ENCODE measurements at regions of chr1 and their contacts with region 1.

Region 1: DNA sequence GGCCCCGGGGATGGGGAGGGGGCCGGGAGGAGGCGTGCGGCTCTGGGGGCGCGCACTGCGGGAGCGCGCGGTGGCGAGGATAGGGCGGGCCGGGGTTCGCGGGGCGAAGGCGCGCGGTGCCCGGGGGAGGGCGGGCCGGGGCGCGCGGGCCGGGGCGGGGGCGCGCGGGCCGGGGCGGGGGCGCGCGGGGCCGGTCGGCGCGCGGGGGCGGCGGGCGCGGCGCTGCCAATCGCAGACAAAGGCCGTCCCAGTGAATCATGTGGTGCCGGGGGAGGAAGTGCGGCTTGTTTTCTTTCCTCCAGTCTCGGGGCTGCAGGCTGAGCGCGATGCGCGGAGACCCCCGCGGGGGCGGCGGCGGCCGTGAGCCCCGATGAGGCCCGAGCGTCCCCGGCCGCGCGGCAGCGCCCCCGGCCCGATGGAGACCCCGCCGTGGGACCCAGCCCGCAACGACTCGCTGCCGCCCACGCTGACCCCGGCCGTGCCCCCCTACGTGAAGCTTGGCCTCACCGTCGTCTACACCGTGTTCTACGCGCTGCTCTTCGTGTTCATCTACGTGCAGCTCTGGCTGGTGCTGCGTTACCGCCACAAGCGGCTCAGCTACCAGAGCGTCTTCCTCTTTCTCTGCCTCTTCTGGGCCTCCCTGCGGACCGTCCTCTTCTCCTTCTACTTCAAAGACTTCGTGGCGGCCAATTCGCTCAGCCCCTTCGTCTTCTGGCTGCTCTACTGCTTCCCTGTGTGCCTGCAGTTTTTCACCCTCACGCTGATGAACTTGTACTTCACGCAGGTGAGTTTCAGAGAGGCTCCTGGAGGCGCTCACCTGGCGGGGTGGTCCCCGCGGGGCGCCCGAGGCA is at the start of gene GPR137B:
- DNase-seq: peak; percentile 78
- ATAC-seq: peak; percentile 67
- H3K4me3 Mint-ChIP-seq: peak within 1 kb of the TSS; percentile 95
- H3K27ac Mint-ChIP-seq: peak within 1 kb of the TSS; percentile 84
- H3K4me1 Mint-ChIP-seq: peaks cover 15% of the 10 kb centered on the region
- H3K27me3 Mint-ChIP-seq: peaks cover 34% of the 10 kb centered on the region
- total RNA-seq, gene GPR137B: 5.0 to 5.6 TPM

Region 2: DNA sequence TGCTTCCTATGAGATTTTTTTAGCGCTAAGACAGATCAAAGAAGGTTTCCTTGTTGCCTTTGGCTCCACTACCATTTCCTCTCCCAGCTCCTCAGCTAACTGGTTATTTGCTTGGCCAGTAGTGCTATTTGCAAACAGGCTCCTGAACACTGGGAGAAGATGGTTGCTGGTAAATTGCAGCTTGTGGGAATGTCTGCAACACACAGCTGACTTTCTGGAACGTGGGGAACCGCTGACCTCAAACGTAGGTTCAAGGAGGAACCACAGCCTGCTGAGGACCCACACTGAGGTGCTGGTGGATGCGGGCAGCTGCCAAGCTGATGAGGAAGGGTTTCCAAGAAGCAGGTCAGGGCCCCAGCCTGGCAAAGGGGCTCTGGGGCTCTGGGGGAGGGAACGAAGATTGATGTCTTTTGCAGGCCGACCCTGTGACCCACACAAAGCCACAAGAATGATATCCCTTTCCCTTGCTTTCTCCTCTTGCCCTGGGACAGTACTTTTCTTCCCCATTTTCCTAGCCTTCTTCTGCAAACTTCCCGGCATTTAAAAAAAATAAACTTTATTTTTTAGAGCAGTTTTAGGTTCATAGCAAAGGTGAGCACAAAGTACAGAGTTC is 517.7 kb before region 1 on chr1:
- CTCF ChIA-PET with region 1: no interaction called
- POLR2A ChIA-PET with region 1: no interaction called
- intact Hi-C with region 1: no loop called
- DNase-seq: no peak
- ATAC-seq: no peak
- H3K4me3 Mint-ChIP-seq: no peak overlapping the region
- H3K27ac Mint-ChIP-seq: no peak overlapping the region
- H3K4me1 Mint-ChIP-seq: peaks cover 2% of the 10 kb centered on the region
- H3K27me3 Mint-ChIP-seq: peaks cover 8% of the 10 kb centered on the region

Region 3: DNA sequence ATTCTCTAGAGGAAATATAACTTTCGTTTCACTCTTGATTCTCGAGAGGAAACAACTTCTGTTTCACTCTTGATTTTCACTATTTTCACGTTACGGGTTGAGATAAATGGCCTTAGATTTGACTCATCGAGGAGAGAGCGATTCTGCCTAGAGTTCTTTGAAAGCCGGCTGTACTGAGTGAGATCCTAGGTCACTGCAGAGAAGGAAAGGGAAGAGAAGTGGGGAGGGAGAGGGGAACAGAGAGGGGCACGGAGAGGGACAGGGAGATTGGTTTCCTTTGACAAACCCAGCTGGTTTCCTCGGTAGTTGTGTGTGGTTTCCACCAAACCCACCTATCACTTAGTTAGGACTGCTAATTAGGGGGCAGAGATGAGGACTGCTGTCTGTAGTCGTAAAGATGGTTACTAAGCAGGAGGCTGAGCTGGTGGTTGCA is 21.7 kb before region 1 on chr1:
- CTCF ChIA-PET with region 1: interaction called, 4 read pairs
- POLR2A ChIA-PET with region 1: no interaction called
- intact Hi-C with region 1: loop called in 1 of 2 experiments (anchors 1 kb)
- DNase-seq: peak; percentile 16
- ATAC-seq: peak; percentile 77
- H3K4me3 Mint-ChIP-seq: no peak overlapping the region
- H3K27ac Mint-ChIP-seq: peak overlapping the region; percentile 8
- H3K4me1 Mint-ChIP-seq: peaks cover 26% of the 10 kb centered on the region
- H3K27me3 Mint-ChIP-seq: peaks cover 13% of the 10 kb centered on the region

Region 4: GRCh38 chr1:236394905-236395780 is 252.7 kb after region 1 on chr1:
- CTCF ChIA-PET with region 1: interaction called, 3 read pairs
- POLR2A ChIA-PET with region 1: no interaction called
- intact Hi-C with region 1: loop called (anchors 5 to 10 kb)
- DNase-seq: peak; percentile 63
- ATAC-seq: peak; percentile 58
- H3K4me3 Mint-ChIP-seq: peak overlapping the region; percentile 79
- H3K27ac Mint-ChIP-seq: peak overlapping the region; percentile 68
- H3K4me1 Mint-ChIP-seq: peaks cover 28% of the 10 kb centered on the region
- H3K27me3 Mint-ChIP-seq: peaks cover 49% of the 10 kb centered on the region

Region 5: DNA sequence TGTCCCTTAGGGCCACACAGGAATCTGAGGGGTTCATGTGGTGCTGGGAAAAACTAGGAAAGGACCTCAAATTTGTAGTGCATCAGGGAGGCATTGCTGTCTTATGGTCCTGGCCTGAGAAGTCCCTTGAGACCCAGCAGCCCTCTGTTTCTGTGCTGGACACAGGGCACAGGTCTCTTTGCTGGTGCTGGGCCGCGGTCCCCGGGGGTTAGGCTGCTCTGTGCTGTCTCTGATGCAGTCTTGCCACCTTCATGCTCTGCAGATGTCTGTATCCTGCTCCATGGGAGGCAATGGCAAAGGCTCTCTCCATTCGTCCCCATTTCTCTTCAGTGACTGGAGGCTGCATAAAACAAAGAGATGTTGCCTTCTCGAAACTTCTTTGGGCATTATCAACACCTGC is 264.6 kb after region 1 on chr1:
- CTCF ChIA-PET with region 1: no interaction called
- POLR2A ChIA-PET with region 1: no interaction called
- intact Hi-C with region 1: no loop called
- DNase-seq: no peak
- ATAC-seq: no peak
- H3K4me3 Mint-ChIP-seq: no peak overlapping the region
- H3K27ac Mint-ChIP-seq: no peak overlapping the region
- H3K4me1 Mint-ChIP-seq: no peaks in the 10 kb centered on the region
- H3K27me3 Mint-ChIP-seq: no peaks in the 10 kb centered on the region

Measured in activated CD4-positive, alpha-beta T cell treated with anti-CD3 and anti-CD28 coated beads for 36 hours (primary cell).